Breast epithelium (tissue), 4 donors: ENCODE measurements at regions of chr15 and their contacts with region 1.

Region 1: DNA sequence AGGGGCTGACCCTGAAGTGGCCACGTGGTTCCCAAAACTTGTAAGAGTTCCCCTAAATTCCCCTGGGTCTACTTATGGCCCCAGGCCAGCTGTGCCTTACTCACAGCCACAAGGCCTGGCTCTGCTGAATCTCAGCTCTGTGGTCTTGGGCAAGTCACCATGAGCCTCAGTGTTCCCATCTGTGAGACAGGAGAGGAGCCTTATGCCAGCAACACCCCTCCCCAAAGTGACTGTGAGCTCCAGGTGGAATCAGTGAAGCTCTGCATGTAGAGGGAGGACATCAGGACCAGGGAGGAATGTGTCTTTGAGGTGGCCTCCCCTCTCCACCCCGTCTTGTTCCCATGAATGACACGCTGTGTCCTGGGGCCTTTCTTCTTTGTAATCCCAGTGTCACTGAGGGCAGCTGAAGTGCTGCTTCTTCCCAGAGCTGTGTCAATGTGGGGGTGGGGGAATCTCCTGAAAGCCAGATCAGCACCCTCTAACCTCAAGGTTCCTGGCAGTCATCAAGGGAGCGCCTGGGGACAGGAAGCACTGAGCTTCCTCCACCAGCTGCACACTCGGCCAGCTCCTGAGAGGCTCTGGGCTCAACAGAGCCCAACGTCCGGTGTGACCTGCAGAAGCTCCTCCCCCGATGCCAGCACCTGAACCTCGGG is 258.9 kb downstream of the UACA start:
- DNase-seq: peak in 1 of 2 donors; percentile 53
- H3K4me3 ChIP-seq: no peak overlapping the region
- H3K27ac ChIP-seq: peak overlapping the region in 1 of 2 donors; percentile 35
- H3K4me1 ChIP-seq: peaks cover 6 to 15% of the 10 kb centered on the region in 2 donors
- H3K27me3 ChIP-seq: no peaks in the 10 kb centered on the region
- CTCF ChIP-seq: no peak
- POLR2A ChIP-seq: no peak

Region 2: DNA sequence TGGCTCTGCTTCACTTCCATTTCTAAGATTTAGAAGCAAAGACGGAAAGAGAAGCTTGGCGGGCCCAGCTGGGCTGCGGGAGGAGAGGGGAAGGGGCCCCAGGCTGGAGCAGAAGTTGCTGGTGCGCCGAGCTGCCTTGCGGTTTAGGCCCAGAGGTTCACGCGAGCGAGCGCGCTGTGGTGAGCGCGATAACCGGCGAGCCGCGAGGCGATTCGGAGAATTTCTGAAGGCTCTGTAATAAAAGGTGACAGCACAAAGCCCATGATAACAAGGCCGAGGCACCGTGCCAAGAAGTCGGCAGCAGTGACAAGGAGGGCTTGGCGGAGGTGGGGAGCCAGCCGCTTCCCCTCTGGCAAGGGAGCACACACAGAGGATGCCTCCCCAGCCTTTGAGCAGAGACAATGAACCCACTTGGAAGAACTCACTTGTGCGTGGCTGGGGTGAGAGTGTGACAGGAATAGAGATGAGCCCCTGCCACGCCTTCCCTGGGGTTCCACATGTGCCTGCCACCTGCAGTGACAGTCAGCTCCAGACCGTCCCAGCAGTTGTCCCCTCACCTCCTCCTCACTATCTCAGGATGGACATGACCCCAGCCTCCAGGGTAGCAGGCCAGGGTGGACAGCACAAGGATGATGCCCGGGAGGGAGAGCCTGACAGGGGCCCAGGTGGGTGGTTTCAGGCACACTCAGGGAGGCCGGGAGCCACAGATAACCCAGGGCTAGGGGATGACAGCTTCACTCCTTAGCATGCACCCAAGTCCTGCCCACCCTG is 56.3 kb before region 1 on chr15:
- intact Hi-C with region 1: loop called (anchors 2 kb)
- DNase-seq: peak in 1 of 2 donors; percentile 17
- H3K4me3 ChIP-seq: peak overlapping the region in 1 of 3 donors; percentile 25
- H3K27ac ChIP-seq: peak overlapping the region in 1 of 2 donors; percentile 55
- H3K4me1 ChIP-seq: no peaks in the 10 kb centered on the region
- H3K27me3 ChIP-seq: no peaks in the 10 kb centered on the region
- CTCF ChIP-seq: no peak
- POLR2A ChIP-seq: no peak